Mammary epithelial cell (primary cell): ENCODE measurements at regions of chr11 and their contacts with region 1.

Region 1: GRCh38 chr11:61776551-61777075 is 15.8 kb downstream of the TMEM258 start:
- DNase-seq: peak; percentile 37
- H3K4me3 ChIP-seq: no peak overlapping the region
- H3K27ac ChIP-seq: no peak overlapping the region
- H3K4me1 ChIP-seq: peaks cover 16% of the 10 kb centered on the region
- H3K27me3 ChIP-seq: no peaks in the 10 kb centered on the region
- CTCF ChIP-seq: peak; percentile 74 to 88

Region 2: GRCh38 chr11:61711498-61711897 is 65.1 kb before region 1 on chr11:
- CTCF ChIA-PET with region 1: no interaction called
- dilution Hi-C with region 1: no loop called
- in situ Hi-C with region 1: no loop called
- intact Hi-C with region 1: no loop called
- DNase-seq: no peak
- H3K4me3 ChIP-seq: no peak overlapping the region
- H3K27ac ChIP-seq: no peak overlapping the region
- H3K4me1 ChIP-seq: no peaks in the 10 kb centered on the region
- H3K27me3 ChIP-seq: peaks cover 8% of the 10 kb centered on the region
- CTCF ChIP-seq: no peak

Region 3: DNA sequence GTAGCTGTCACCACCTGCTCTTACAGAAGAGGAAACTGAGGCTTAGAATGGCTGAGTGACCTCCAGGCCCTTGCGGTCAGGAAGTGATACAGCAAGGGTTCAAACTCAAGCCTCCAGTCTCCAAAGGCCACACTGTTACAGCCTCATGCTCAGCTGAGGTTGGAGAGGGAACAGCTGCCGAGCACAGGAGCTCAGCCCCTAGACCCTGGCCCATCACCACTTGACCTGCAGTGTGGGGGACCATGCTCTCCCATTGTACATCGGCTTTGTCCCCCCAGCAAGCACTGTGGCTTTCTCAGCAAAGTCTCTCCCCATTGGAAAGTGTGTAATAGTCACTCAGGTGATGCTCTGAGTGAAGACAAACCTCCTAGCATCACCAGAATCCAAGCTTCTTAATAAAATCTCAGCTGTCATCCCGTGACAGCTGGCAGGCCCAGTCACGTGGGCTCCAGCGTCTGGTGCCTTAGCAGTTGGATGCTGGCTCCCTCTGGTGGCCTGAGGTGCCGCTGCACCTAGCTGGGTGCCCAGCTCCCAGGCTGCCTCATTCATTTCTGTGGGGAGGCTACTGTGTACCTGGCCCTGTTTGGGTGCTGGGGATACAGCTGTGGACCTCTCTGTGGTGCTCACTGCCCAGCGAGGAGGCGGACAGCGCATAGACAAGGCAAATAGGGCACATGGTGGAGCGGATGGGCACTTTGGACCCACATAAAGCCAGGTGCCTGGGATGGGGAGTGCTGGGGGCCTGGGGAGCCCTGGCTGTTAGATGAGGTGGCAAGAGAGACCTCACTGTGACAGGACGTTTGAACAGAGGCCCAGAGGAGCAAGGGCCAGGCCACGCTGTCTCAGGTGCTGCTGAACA is 43.3 kb before region 1 on chr11:
- CTCF ChIA-PET with region 1: no interaction called
- dilution Hi-C with region 1: no loop called
- in situ Hi-C with region 1: no loop called
- intact Hi-C with region 1: no loop called
- DNase-seq: peak; percentile 70
- H3K4me3 ChIP-seq: no peak overlapping the region
- H3K27ac ChIP-seq: no peak overlapping the region
- H3K4me1 ChIP-seq: peaks cover 27% of the 10 kb centered on the region
- H3K27me3 ChIP-seq: no peaks in the 10 kb centered on the region
- CTCF ChIP-seq: peak; percentile 99 to 100

Region 4: DNA sequence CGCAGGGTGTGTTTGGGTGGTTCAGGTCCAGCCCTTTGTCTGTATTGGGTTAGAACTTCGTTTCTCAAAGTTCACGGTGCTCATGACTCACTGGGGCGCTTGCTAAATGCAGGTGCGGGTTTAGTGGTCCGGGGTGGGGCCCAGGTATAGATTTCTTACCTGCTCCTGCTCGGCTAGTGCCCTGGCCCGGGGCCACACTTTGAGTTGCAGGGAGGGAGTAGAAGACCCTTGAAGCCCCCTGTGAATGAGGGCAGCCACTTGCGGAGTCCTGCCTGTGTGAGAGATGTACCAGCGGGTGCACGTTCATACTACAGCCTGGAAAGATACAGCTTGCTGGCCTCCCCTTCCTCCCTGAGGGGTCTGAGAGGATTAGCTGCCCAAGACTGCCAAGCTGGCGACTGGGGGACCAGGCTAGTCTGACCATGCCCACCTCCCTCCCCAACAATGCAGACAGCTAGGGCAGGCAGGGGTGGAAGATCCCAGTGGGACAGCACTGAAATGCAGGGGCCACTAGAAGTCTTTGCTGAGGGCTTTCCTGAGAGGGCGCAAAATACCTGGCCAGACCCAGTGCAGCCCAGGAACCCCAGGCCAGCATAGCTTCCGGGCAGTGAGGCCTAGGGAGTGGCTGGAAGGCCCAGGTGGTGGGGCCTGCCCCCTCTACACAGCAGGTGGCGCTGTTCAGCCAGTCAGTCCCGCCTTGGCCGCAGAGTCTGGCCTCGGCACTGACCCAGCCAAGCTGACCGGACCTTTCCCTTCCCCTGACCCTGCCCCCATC is 29.2 kb before region 1 on chr11:
- CTCF ChIA-PET with region 1: no interaction called
- dilution Hi-C with region 1: no loop called
- in situ Hi-C with region 1: no loop called
- intact Hi-C with region 1: loop called (anchors 1 kb)
- DNase-seq: peak; percentile 31
- H3K4me3 ChIP-seq: no peak overlapping the region
- H3K27ac ChIP-seq: no peak overlapping the region
- H3K4me1 ChIP-seq: no peaks in the 10 kb centered on the region
- H3K27me3 ChIP-seq: no peaks in the 10 kb centered on the region
- CTCF ChIP-seq: peak; percentile 80 to 87

Region 5: DNA sequence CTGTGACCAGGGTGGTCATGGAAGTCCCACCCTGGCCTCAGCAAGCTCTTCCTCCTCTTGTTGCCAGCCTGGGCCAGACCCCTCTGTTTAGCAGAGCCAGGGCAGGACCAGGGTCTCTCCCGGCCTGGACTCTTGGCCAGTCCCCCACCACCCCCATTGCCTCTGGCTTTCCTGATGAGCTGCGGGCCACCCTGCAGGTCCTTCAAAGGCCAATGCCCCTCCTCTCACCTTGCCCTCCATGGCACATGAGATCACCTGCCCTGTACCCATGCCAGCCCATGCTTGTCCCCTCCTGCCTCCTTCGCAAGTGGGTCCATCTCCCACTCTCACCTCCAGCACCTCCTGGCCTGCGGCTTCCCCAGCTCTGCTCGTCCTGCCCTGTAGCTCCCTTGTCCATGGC is 61.9 kb after region 1 on chr11:
- CTCF ChIA-PET with region 1: interaction called, 14 read pairs
- dilution Hi-C with region 1: no loop called
- in situ Hi-C with region 1: no loop called
- intact Hi-C with region 1: no loop called
- DNase-seq: no peak
- H3K4me3 ChIP-seq: no peak overlapping the region
- H3K27ac ChIP-seq: no peak overlapping the region
- H3K4me1 ChIP-seq: no peaks in the 10 kb centered on the region
- H3K27me3 ChIP-seq: no peaks in the 10 kb centered on the region
- CTCF ChIP-seq: no peak